Pancreas (tissue), 10 donors: ENCODE measurements at regions of chr19 and their contacts with region 1.

Region 1: DNA sequence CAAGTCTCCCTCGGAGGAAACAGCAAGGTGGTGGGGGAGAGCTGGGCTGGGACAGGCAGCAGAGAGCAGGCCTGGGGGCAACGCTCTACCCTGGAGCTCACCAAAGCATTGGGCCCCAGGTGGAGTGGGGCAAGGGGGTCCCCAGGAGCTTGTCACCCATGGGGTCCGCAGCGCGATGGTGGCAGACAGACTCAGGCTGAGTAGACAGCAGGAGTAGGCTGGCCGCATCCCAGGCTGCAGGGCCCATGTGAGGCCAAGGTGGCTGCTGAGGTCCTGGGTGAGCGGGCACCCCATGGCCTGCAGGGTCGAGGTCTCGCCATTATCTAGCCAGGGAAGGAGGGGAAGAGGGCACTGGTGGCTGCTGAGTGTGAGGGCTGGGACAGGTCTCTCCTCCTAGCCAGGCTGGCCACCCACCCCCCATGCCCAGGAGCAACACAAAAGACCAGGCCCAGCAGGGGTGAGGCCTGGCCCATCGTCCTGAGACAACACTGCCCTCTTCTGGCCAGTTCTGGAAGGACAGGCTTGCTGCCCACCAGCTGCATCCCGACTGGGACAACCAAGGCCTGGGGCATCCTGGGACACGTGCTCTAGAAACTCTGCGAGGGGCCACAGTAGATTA is 33.1 kb downstream of the CEBPG start:
- DNase-seq: peak; percentile 44 to 93 (median 80)
- ATAC-seq: peak; percentile 60 to 79 (median 74)
- H3K4me3 ChIP-seq: no peak overlapping the region
- H3K27ac ChIP-seq: no peak overlapping the region
- H3K4me1 ChIP-seq: peaks cover 7 to 11% (median 8%) of the 10 kb centered on the region in 3 donors
- H3K27me3 ChIP-seq: no peaks in the 10 kb centered on the region
- CTCF ChIP-seq: peak; percentile 91 to 97 (median 92)

Region 2: DNA sequence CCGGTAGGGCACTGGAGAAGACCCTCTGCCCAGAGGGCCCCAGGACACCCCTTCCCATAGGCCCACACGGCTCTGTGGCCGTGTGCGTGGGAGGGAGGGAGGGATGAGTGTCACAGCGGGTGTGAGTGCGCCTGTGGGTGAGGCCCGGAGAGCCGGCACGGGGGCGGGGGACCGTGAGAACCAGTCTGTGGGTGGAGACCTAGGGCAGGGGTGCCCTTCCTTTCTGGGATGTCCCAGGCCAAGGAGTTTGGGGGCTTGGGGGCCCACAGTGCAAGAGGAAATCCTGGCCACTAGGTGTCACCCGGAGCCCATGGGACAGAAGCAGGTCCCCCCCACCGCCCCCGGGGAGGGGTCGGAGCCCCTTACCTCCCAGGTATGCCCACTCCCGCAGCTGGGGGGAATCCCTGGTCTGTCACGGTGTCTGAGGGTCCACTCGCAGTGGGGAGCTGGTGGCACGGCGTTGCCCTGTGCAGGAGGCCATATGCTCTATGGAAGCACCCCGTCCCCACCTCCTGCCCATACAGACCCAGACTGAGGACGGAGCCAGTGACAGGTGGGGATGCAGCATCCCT is 165.0 kb before region 1 on chr19:
- intact Hi-C with region 1: loop called (anchors 2 to 10 kb)
- DNase-seq: peak in 3 of 6 donors; percentile 16 to 82 (median 42)
- ATAC-seq: peak; percentile 61 to 84 (median 76)
- H3K4me3 ChIP-seq: no peak overlapping the region
- H3K27ac ChIP-seq: no peak overlapping the region
- H3K4me1 ChIP-seq: no peaks in the 10 kb centered on the region
- H3K27me3 ChIP-seq: no peaks in the 10 kb centered on the region
- CTCF ChIP-seq: peak; percentile 39 to 90 (median 71)

Region 3: DNA sequence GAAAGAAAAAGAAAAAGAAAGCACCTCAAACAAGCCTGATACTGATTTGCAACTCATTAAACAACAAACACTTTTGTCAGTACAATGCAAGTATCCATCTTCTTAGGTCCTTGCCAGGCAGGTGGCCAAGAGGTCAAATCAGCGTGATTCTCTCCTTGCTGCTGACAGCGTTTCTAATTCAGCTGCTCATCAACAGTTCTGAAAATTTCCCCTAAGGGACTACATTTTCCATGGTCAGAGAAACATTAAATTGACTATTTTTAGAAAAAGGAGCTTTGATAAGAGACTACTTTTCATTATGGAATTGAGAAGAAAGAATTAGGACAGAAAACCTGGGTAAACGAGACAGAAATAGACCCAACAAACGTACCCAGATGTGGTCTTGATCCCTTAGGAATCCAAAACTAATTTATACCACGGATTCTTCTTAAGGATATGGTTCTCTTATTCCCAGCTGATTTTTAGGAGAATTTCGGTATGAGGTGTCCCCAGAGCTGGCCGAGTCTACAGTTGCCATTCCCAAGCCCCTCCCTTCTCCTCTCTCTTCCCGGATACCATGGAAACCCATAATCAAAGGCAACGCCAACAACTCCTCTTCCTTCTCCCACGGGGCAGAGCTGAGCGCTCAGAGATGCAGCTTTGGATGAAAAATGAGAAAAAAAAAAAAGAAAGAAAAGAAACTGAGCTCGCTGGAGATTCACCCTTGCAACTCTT is 62.6 kb before region 1 on chr19:
- intact Hi-C with region 1: no loop called
- DNase-seq: no peak
- ATAC-seq: peak in 1 of 4 donors; percentile 57
- H3K4me3 ChIP-seq: no peak overlapping the region
- H3K27ac ChIP-seq: no peak overlapping the region
- H3K4me1 ChIP-seq: no peaks in the 10 kb centered on the region
- H3K27me3 ChIP-seq: no peaks in the 10 kb centered on the region
- CTCF ChIP-seq: no peak